ENCODE measurements at regions of chr2 and their contacts with region 1.

Region 1: DNA sequence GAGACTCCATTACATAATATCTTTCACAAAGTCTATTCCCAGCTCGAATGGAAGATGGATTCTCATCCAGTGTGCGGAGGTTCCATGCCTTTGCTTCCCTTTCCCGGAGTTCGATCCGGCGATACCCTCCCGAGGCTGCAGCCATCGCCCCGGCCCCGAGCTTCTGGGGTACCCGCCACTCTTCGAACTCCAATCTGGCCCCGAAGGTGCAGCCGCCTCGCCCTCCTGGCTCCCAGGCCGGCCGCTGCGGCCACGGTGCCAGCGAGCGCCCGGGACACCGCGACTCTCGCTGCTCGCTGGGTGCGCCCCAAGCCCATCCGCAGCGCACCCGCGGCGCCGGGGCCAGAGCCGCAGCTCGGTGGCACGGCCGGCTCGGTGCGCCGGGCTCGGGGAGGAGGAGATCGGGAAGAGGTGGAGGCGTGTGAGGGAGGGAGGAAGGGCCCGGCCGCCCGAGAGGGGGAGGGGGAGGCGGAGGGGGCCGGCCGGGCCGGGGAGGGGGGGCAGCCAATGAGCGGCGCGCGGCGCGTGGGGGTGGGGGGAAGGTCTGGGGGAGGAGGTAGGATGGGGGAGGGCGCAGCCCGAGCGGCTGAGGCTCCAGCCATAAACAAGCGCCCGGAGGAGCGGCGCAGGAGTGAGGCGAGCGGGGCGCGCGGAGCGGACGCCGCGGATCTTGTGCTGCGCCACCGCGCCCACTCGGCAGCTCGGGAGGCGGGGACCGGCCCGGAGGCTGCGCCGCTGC is at the start of gene CRIM1:
- DNase-seq: no peak
- H3K4me3 ChIP-seq: peak within 1 kb of the TSS; percentile 72
- CTCF ChIP-seq: no peak

Region 2: DNA sequence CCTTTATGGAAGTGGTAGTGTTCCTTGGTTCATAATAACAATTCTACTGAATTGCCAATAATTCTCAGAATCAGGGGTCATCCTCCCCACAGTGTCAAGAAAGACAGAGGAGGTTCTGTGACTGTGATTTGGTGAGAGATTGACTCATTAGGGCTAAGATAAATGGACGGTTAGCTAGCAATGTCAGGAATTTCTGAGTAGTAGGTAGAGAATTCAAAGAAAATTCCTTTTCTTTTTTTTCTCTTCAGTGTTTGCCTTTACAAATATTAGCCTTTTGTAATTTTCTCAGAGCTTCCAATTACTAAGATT is 16.5 kb before region 1 on chr2:
- CTCF ChIA-PET with region 1: interaction called, 24 read pairs
- POLR2A ChIA-PET with region 1: interaction called, 5 read pairs
- DNase-seq: no peak
- H3K4me3 ChIP-seq: no peak overlapping the region
- CTCF ChIP-seq: no peak

Region 3: GRCh38 chr2:36461039-36461681 is 105.8 kb after region 1 on chr2:
- CTCF ChIA-PET with region 1: interaction called, 18 read pairs
- POLR2A ChIA-PET with region 1: interaction called, 5 read pairs
- DNase-seq: peak; percentile 79
- H3K4me3 ChIP-seq: no peak overlapping the region
- CTCF ChIP-seq: no peak

Region 4: DNA sequence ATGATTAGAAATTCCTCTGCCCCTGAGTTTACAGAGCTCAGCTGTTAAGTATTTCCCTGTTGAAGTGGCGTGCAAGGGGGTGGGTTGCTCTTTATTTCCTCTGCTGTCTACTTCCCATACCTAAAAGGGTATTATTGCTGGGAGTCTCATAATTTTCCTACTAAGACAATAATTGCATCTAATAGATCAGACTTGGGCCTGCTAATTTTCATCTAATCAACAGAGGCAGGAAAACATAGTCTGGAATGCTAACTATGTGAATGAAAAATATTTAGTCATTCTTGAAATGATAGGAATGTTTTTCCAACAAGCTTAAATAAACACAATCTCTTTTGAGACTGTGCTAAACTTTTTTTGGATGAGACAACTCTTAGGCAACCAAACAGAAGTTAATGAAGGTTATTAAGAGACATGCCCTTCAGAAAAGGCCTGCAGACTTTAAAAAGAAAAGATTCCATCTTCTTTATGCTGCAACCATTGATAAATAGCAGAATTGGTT is 131.3 kb after region 1 on chr2:
- CTCF ChIA-PET with region 1: interaction called, 24 read pairs
- POLR2A ChIA-PET with region 1: interaction called, 11 read pairs
- DNase-seq: peak; percentile 79
- H3K4me3 ChIP-seq: no peak overlapping the region
- CTCF ChIP-seq: no peak

Region 5: GRCh38 chr2:36492216-36492945 is 137.1 kb after region 1 on chr2:
- CTCF ChIA-PET with region 1: interaction called, 24 read pairs
- POLR2A ChIA-PET with region 1: interaction called, 6 read pairs
- DNase-seq: no peak
- H3K4me3 ChIP-seq: no peak overlapping the region
- CTCF ChIP-seq: no peak

Region 6: GRCh38 chr2:36539631-36540030 is 184.3 kb after region 1 on chr2:
- CTCF ChIA-PET with region 1: interaction called, 20 read pairs
- POLR2A ChIA-PET with region 1: no interaction called
- DNase-seq: peak; percentile 24
- H3K4me3 ChIP-seq: no peak overlapping the region
- CTCF ChIP-seq: no peak

Region 7: GRCh38 chr2:36672199-36672598 is 316.9 kb after region 1 on chr2:
- CTCF ChIA-PET with region 1: interaction called, 11 read pairs
- POLR2A ChIA-PET with region 1: no interaction called
- DNase-seq: no peak
- H3K4me3 ChIP-seq: no peak overlapping the region
- CTCF ChIP-seq: peak; percentile 50

Region 8: GRCh38 chr2:36731941-36732648 is 376.8 kb after region 1 on chr2:
- CTCF ChIA-PET with region 1: no interaction called
- POLR2A ChIA-PET with region 1: no interaction called
- DNase-seq: no peak
- H3K4me3 ChIP-seq: no peak overlapping the region
- CTCF ChIP-seq: no peak